Naive thymus-derived CD4-positive, alpha-beta T cell (primary cell): ENCODE measurements at regions of chr3 and their contacts with region 1.

Region 1: GRCh38 chr3:190513409-190514162 is at the start of gene IL1RAP:
- DNase-seq: peak; percentile 80 to 93 (median 90)
- ATAC-seq: peak; percentile 93
- H3K4me3 ChIP-seq: peak within 1 kb of the TSS; percentile 93
- H3K4me3 Mint-ChIP-seq: peak within 1 kb of the TSS; percentile 85 to 98 (median 92)
- H3K27ac ChIP-seq: peak within 1 kb of the TSS; percentile 77
- H3K27ac Mint-ChIP-seq: peak within 1 kb of the TSS in 7 of 9 donors; percentile 86 to 98 (median 96)
- H3K4me1 ChIP-seq: peaks cover 11 to 15% of the 10 kb centered on the region in 2 donors
- H3K4me1 Mint-ChIP-seq: peaks cover 18 to 37% (median 26%) of the 10 kb centered on the region in 7 donors
- H3K27me3 ChIP-seq: no peaks in the 10 kb centered on the region
- H3K27me3 Mint-ChIP-seq: peaks cover 0 to 4% (median 0%) of the 10 kb centered on the region in 5 donors
- total RNA-seq, gene IL1RAP: 12.0 to 29.0 (median 14.8) TPM

Region 2: GRCh38 chr3:189961525-189962161 is 551.9 kb before region 1 on chr3:
- CTCF ChIA-PET with region 1: no interaction called
- POLR2A ChIA-PET with region 1: no interaction called
- intact Hi-C with region 1: loop called in 1 of 2 experiments (anchors 5 kb)
- DNase-seq: peak in 8 of 9 donors; percentile 31 to 67 (median 44)
- ATAC-seq: peak; percentile 80
- H3K4me3 ChIP-seq: no peak overlapping the region
- H3K4me3 Mint-ChIP-seq: peak overlapping the region in 1 of 10 donors; percentile 29
- H3K27ac ChIP-seq: no peak overlapping the region
- H3K27ac Mint-ChIP-seq: no peak overlapping the region
- H3K4me1 ChIP-seq: no peaks in the 10 kb centered on the region
- H3K4me1 Mint-ChIP-seq: peaks cover 2 to 10% (median 6%) of the 10 kb centered on the region in 7 donors
- H3K27me3 ChIP-seq: no peaks in the 10 kb centered on the region
- H3K27me3 Mint-ChIP-seq: peaks cover 7 to 19% (median 15%) of the 10 kb centered on the region in 5 donors

Region 3: DNA sequence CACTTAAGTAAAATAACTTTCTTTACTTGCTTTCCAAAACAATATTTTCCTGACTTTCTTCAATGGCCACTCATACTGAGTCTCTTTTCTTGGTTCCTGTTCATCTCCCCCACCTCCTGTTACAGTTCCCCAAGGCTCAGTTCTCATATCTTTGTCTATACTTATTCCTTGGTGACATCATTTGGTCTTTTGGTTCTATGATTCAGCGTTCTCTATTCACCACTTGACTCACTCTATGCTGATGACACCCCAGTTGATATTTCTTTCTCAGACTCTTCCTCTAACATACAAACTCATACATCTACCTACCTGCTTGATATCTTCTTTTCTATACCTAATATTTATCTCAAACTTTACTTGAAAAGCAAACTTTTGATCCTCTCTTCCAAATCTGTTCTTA is 307.8 kb before region 1 on chr3:
- CTCF ChIA-PET with region 1: no interaction called
- POLR2A ChIA-PET with region 1: no interaction called
- intact Hi-C with region 1: no loop called
- DNase-seq: no peak
- ATAC-seq: peak; percentile 59
- H3K4me3 ChIP-seq: no peak overlapping the region
- H3K4me3 Mint-ChIP-seq: no peak overlapping the region
- H3K27ac ChIP-seq: no peak overlapping the region
- H3K27ac Mint-ChIP-seq: no peak overlapping the region
- H3K4me1 ChIP-seq: no peaks in the 10 kb centered on the region
- H3K4me1 Mint-ChIP-seq: peaks cover 0 to 4% (median 0%) of the 10 kb centered on the region in 7 donors
- H3K27me3 ChIP-seq: no peaks in the 10 kb centered on the region
- H3K27me3 Mint-ChIP-seq: peaks cover 4 to 40% (median 9%) of the 10 kb centered on the region in 5 donors

Region 4: GRCh38 chr3:190321789-190322603 is 191.6 kb before region 1 on chr3 and contains the start of gene CLDN1:
- CTCF ChIA-PET with region 1: no interaction called
- POLR2A ChIA-PET with region 1: no interaction called
- intact Hi-C with region 1: loop called in 1 of 2 experiments (anchors 5 kb)
- DNase-seq: peak; percentile 47 to 86 (median 76)
- ATAC-seq: peak; percentile 92
- H3K4me3 ChIP-seq: peak within 1 kb of the TSS; percentile 52
- H3K4me3 Mint-ChIP-seq: peak within 1 kb of the TSS; percentile 66 to 85 (median 80)
- H3K27ac ChIP-seq: no peak within 1 kb of the TSS
- H3K27ac Mint-ChIP-seq: peak within 1 kb of the TSS in 6 of 9 donors; percentile 6 to 38 (median 22)
- H3K4me1 ChIP-seq: peaks cover 0 to 4% of the 10 kb centered on the region in 2 donors
- H3K4me1 Mint-ChIP-seq: peaks cover 14 to 30% (median 21%) of the 10 kb centered on the region in 7 donors
- H3K27me3 ChIP-seq: no peaks in the 10 kb centered on the region
- H3K27me3 Mint-ChIP-seq: peaks cover 30 to 47% (median 38%) of the 10 kb centered on the region in 5 donors
- total RNA-seq, gene CLDN1: 0.08 to 0.32 TPM in 2 of 5 experiments, not detected in the others

Region 5: DNA sequence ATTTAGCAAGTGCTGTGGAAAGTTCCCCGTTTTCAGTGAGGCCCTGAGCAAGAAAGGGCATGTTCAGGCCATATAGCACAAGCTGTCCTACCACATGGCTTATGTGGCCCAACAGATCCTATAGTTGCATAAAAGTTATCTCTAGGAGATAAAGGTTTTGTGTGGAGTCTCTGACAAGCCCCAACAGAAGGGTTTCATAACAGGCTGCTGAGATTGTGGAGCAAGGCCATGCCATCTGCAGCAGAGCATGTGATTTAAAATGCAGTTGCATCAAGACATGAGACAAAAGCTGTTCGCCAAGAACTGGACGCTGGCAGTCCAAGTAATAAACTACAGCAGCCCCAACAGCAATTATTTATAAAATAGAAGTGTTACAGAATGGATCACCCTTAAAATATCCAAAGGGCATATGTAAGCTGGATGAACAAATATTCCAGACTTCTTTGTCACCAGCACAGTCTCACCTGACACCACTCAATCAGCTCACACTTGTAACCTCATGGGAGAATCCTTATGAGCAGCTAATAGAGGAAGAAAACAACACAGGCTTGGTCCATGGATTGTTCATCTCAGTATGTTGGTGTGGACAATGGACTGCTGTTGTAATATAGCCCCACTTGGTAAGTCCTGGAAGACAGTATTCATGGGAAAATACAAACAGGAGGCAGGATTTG is 176.9 kb before region 1 on chr3:
- CTCF ChIA-PET with region 1: no interaction called
- POLR2A ChIA-PET with region 1: no interaction called
- intact Hi-C with region 1: no loop called
- DNase-seq: no peak
- ATAC-seq: no peak
- H3K4me3 ChIP-seq: no peak overlapping the region
- H3K4me3 Mint-ChIP-seq: no peak overlapping the region
- H3K27ac ChIP-seq: no peak overlapping the region
- H3K27ac Mint-ChIP-seq: no peak overlapping the region
- H3K4me1 ChIP-seq: no peaks in the 10 kb centered on the region
- H3K4me1 Mint-ChIP-seq: peaks cover 0 to 5% (median 0%) of the 10 kb centered on the region in 7 donors
- H3K27me3 ChIP-seq: peaks cover 0 to 3% of the 10 kb centered on the region in 2 donors
- H3K27me3 Mint-ChIP-seq: peaks cover 2 to 10% (median 5%) of the 10 kb centered on the region in 5 donors

Region 6: GRCh38 chr3:190404715-190405114 is 108.9 kb before region 1 on chr3:
- CTCF ChIA-PET with region 1: no interaction called
- POLR2A ChIA-PET with region 1: no interaction called
- intact Hi-C with region 1: no loop called
- DNase-seq: no peak
- ATAC-seq: no peak
- H3K4me3 ChIP-seq: no peak overlapping the region
- H3K4me3 Mint-ChIP-seq: no peak overlapping the region
- H3K27ac ChIP-seq: no peak overlapping the region
- H3K27ac Mint-ChIP-seq: no peak overlapping the region
- H3K4me1 ChIP-seq: no peaks in the 10 kb centered on the region
- H3K4me1 Mint-ChIP-seq: no peaks in the 10 kb centered on the region
- H3K27me3 ChIP-seq: no peaks in the 10 kb centered on the region
- H3K27me3 Mint-ChIP-seq: peaks cover 0 to 16% (median 0%) of the 10 kb centered on the region in 5 donors

Region 7: DNA sequence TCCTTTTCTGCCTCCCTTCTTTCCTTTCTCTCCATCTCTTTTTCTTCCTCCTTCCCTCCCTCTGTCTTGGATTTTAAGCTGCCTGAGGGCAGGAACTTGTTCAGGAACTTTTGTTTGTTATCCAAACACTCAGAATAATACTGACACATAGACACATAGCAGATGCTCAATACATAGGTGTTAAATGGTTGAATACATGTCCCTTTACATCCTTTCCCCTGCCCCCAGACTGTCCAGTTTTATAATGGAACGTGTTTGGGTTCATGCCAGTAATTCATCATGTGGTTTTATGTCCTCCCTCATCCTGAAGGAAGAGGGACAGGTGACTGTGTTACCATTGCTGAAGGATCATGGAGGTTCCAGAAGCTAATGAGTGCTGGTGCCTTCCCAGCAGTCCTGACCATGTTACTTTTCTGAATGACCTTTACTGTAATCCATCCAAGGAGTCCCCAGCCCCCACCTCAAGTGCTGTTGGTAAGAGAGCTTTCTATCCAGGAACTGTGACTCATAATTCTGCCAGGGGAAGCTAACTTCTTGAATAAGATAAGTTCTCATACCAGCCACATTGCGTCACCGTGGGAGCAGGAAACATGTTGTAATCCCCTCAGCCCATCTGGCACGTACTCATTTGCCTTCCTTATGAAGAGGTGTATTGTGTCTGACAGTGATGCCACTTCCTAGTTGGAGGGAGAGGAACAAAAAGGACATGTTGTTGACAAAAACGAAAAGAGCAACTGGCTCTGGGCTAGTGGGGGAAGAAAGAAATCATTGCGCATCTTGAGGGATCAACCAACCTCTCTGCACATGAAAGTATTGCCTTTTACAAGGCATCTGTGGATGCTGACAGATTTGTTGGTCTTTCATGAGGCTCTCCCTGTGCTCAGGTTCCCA is 52.7 kb after region 1 on chr3:
- CTCF ChIA-PET with region 1: no interaction called
- POLR2A ChIA-PET with region 1: no interaction called
- intact Hi-C with region 1: loop called in 1 of 2 experiments (anchors 1 kb)
- DNase-seq: peak in 2 of 9 donors; percentile 9 to 73
- ATAC-seq: peak; percentile 89
- H3K4me3 ChIP-seq: no peak overlapping the region
- H3K4me3 Mint-ChIP-seq: peak overlapping the region in 1 of 10 donors; percentile 65
- H3K27ac ChIP-seq: no peak overlapping the region
- H3K27ac Mint-ChIP-seq: peak overlapping the region in 1 of 9 donors; percentile 78
- H3K4me1 ChIP-seq: no peaks in the 10 kb centered on the region
- H3K4me1 Mint-ChIP-seq: peaks cover 0 to 58% (median 0%) of the 10 kb centered on the region in 7 donors
- H3K27me3 ChIP-seq: no peaks in the 10 kb centered on the region
- H3K27me3 Mint-ChIP-seq: no peaks in the 10 kb centered on the region

Region 8: DNA sequence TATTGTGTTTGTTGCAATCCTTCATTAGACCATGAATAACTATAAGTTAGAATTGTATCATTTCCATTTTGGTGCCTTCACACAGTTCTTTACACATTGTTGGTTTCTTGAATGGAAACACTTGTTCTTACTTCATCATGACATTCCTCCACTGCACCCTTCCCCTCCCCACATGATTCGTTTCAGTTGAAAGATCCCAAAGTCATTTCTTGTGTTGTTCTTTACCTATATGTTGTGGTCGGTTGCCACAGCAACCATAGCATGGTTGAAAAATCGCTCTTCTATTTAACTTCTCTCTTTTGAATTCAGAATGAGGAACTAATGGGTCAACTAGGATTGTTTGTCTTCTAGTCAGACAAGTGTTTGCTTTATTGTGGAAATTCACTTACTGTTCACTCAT is 103.6 kb after region 1 on chr3:
- CTCF ChIA-PET with region 1: no interaction called
- POLR2A ChIA-PET with region 1: no interaction called
- intact Hi-C with region 1: loop called (anchors 1 to 5 kb)
- DNase-seq: peak in 1 of 9 donors; percentile 43
- ATAC-seq: peak; percentile 86
- H3K4me3 ChIP-seq: no peak overlapping the region
- H3K4me3 Mint-ChIP-seq: peak overlapping the region in 1 of 10 donors; percentile 78
- H3K27ac ChIP-seq: no peak overlapping the region
- H3K27ac Mint-ChIP-seq: peak overlapping the region in 1 of 9 donors; percentile 94
- H3K4me1 ChIP-seq: peaks cover 0 to 4% of the 10 kb centered on the region in 2 donors
- H3K4me1 Mint-ChIP-seq: peaks cover 26 to 81% (median 31%) of the 10 kb centered on the region in 7 donors
- H3K27me3 ChIP-seq: no peaks in the 10 kb centered on the region
- H3K27me3 Mint-ChIP-seq: no peaks in the 10 kb centered on the region

Region 9: GRCh38 chr3:192005989-192006388 is 1492.4 kb after region 1 on chr3:
- CTCF ChIA-PET with region 1: no interaction called
- POLR2A ChIA-PET with region 1: no interaction called
- intact Hi-C with region 1: no loop called
- DNase-seq: no peak
- ATAC-seq: no peak
- H3K4me3 ChIP-seq: no peak overlapping the region
- H3K4me3 Mint-ChIP-seq: no peak overlapping the region
- H3K27ac ChIP-seq: no peak overlapping the region
- H3K27ac Mint-ChIP-seq: no peak overlapping the region
- H3K4me1 ChIP-seq: no peaks in the 10 kb centered on the region
- H3K4me1 Mint-ChIP-seq: no peaks in the 10 kb centered on the region
- H3K27me3 ChIP-seq: no peaks in the 10 kb centered on the region
- H3K27me3 Mint-ChIP-seq: no peaks in the 10 kb centered on the region